Common myeloid progenitor, CD34-positive (primary cell): ENCODE measurements at regions of chr1 and their contacts with region 1.

Region 1: DNA sequence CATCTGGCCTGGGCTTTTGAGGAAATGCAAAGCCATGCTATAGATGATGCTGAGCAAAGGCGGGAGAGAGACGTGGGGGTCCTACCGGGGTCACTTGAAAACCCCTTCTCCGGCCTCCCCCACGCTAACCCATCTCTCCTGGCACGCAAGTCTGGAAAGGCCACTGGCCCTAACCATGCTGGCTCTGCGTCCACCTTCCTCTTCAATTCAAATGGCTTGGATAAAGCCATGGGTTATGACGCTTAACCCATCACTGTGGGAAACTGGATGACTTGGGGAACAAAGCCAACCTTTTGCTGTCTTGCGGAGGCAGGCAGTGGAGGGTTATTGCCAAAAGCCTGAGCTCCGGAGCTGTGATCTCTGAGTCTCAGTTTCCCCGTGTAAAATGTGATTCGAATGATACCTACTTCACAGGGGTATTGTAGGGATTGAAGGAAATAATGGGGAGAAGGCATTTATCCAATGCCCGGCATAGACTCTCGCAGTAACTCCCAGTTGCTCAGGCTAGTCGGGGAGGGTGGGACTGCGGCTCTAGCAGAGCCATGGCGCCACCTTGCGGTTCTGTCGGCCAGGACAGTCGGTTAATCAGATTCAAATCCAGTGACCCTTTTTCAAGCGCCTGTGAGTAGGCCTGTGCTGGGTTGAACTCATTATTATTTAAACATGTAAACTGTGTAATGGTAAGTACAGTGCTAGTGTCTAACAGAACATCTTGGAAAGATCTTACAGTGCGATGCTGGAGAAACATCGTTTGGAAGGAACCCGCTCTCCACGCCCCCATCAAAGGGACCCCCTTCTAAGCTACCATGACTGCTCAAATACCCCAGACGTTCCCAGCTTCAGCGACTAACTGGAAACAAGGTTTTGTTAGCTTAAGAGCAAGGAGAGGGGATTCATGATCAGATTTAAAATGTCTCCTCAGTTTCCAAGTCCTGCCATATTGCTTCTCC is 20.3 kb downstream of the NEK2 start:
- DNase-seq: peak; percentile 83 to 90 (median 83)
- H3K4me3 ChIP-seq: no peak overlapping the region
- H3K27ac ChIP-seq: no peak overlapping the region
- H3K4me1 ChIP-seq: no peaks in the 10 kb centered on the region
- H3K27me3 ChIP-seq: peaks cover 0 to 3% (median 0%) of the 10 kb centered on the region in 5 experiments

Region 2: DNA sequence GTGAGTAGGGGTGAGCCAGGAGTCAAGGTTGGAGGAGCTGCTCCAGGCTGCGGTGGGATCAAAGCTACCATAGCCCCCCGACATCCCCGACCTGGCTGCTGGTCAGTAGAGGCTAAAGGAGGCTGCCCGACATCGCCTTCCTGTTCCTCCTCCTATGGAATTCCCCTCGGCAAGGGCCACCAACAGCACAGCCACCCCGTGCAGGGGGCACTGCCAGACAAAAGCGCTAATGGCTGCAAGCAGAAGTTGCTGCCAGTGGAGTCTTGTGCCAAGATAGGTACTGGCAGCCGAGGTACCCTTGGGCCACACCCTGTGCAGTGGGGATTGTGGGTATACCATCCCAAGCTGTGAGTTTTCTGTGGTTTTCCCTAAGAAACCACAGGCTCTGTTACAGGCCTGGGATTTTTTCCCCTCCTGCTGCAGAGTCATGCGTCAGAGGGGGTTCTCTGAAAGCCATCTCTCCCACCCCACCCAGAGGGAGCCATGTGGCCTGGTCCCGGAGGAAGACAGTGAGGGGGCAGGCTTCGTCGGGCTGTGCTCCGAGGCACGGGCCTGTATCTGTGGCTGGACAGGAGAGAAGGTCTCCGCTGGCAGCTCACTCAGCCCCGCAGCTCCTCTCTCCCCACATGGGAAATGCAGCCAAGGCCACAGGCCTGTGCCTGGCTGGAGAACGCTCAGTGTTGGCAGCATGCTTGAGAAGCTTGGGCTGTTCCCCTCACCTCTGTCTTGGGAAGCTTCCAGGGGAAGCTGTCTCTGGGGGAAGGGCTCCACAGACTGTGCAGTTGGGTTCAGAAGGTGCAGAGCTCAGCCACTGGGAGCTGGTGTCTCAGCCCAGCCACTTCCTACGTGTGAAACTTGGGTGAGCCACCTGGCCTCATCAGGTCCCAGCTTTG is 22.2 kb before region 1 on chr1:
- CTCF ChIA-PET with region 1: interaction called, 114 read pairs
- POLR2A ChIA-PET with region 1: no interaction called
- DNase-seq: peak in 2 of 3 donors; percentile 60 to 63
- H3K4me3 ChIP-seq: no peak overlapping the region
- H3K27ac ChIP-seq: no peak overlapping the region
- H3K4me1 ChIP-seq: peaks cover 0 to 20% (median 14%) of the 10 kb centered on the region in 4 experiments
- H3K27me3 ChIP-seq: peaks cover 0 to 56% (median 11%) of the 10 kb centered on the region in 5 experiments

Region 3: GRCh38 chr1:211667065-211667617 is 12.0 kb after region 1 on chr1:
- CTCF ChIA-PET with region 1: interaction called, 27 read pairs
- POLR2A ChIA-PET with region 1: no interaction called
- DNase-seq: no peak
- H3K4me3 ChIP-seq: no peak overlapping the region
- H3K27ac ChIP-seq: no peak overlapping the region
- H3K4me1 ChIP-seq: no peaks in the 10 kb centered on the region
- H3K27me3 ChIP-seq: no peaks in the 10 kb centered on the region